CD4-positive, alpha-beta memory T cell (primary cell): ENCODE measurements at regions of chr1 and their contacts with region 1.

Region 1: GRCh38 chr1:26279456-26280332 is at the start of gene SH3BGRL3:
- DNase-seq: peak; percentile 83 to 88 (median 86)
- H3K4me3 ChIP-seq: peak within 1 kb of the TSS; percentile 50 to 92
- H3K4me3 Mint-ChIP-seq: peak within 1 kb of the TSS; percentile 85 to 96 (median 90)
- H3K27ac ChIP-seq: peak within 1 kb of the TSS; percentile 82
- H3K27ac Mint-ChIP-seq: peak within 1 kb of the TSS; percentile 94 to 98 (median 97)
- H3K4me1 ChIP-seq: peaks cover 88% of the 10 kb centered on the region
- H3K4me1 Mint-ChIP-seq: peaks cover 58 to 90% (median 76%) of the 10 kb centered on the region in 4 donors
- H3K27me3 ChIP-seq: no peaks in the 10 kb centered on the region
- H3K27me3 Mint-ChIP-seq: no peaks in the 10 kb centered on the region
- total RNA-seq, gene SH3BGRL3: 293 to 305 TPM

Region 2: GRCh38 chr1:26161415-26162219 is 118.1 kb before region 1 on chr1:
- CTCF ChIA-PET with region 1: no interaction called
- POLR2A ChIA-PET with region 1: no interaction called
- intact Hi-C with region 1: no loop called
- DNase-seq: peak in 4 of 5 donors; percentile 20 to 35 (median 26)
- H3K4me3 ChIP-seq: no peak overlapping the region
- H3K4me3 Mint-ChIP-seq: peak overlapping the region in 7 of 8 donors; percentile 40 to 74 (median 59)
- H3K27ac ChIP-seq: no peak overlapping the region
- H3K27ac Mint-ChIP-seq: no peak overlapping the region
- H3K4me1 ChIP-seq: peaks cover 16% of the 10 kb centered on the region
- H3K4me1 Mint-ChIP-seq: peaks cover under 1 to 11% (median 8%) of the 10 kb centered on the region in 4 donors
- H3K27me3 ChIP-seq: peaks cover 7% of the 10 kb centered on the region
- H3K27me3 Mint-ChIP-seq: peaks cover 14 to 27% of the 10 kb centered on the region in 2 donors

Region 3: DNA sequence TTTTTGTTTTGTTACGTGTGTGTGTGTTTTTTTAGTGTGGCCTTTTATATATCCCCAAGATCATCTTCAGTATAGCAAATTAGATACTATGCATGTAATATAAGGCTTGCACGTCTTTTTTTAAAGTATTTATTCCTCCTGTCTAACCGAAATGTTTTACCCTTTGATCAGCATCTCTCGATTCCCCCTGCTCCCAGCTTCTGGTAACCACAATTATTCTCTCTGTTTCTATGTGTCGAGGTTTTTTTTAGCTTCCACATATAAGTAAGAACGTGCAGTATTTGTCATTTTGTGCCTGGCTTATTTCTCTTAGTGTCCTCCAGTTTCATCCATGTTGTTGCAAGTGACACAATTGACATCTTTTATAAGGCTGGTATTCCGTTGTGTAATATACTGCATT is 27.0 kb before region 1 on chr1:
- CTCF ChIA-PET with region 1: no interaction called
- POLR2A ChIA-PET with region 1: no interaction called
- intact Hi-C with region 1: no loop called
- DNase-seq: no peak
- H3K4me3 ChIP-seq: no peak overlapping the region
- H3K4me3 Mint-ChIP-seq: no peak overlapping the region
- H3K27ac ChIP-seq: no peak overlapping the region
- H3K27ac Mint-ChIP-seq: peak overlapping the region in 2 of 7 donors; percentile 9 to 46
- H3K4me1 ChIP-seq: no peaks in the 10 kb centered on the region
- H3K4me1 Mint-ChIP-seq: peaks cover 0 to 9% (median 2%) of the 10 kb centered on the region in 4 donors
- H3K27me3 ChIP-seq: no peaks in the 10 kb centered on the region
- H3K27me3 Mint-ChIP-seq: no peaks in the 10 kb centered on the region

Region 4: GRCh38 chr1:26306290-26307229 is 26.9 kb after region 1 on chr1 and contains the start of gene UBXN11:
- CTCF ChIA-PET with region 1: interaction called, 1,027 read pairs
- POLR2A ChIA-PET with region 1: interaction called, 3,358 read pairs
- intact Hi-C with region 1: no loop called
- DNase-seq: peak; percentile 90 to 97 (median 91)
- H3K4me3 ChIP-seq: peak within 1 kb of the TSS; percentile 69 to 86
- H3K4me3 Mint-ChIP-seq: peak within 1 kb of the TSS; percentile 95 to 99 (median 98)
- H3K27ac ChIP-seq: peak within 1 kb of the TSS; percentile 74
- H3K27ac Mint-ChIP-seq: peak within 1 kb of the TSS; percentile 92 to 99 (median 98)
- H3K4me1 ChIP-seq: peaks cover 42% of the 10 kb centered on the region
- H3K4me1 Mint-ChIP-seq: peaks cover 25 to 40% (median 33%) of the 10 kb centered on the region in 4 donors
- H3K27me3 ChIP-seq: no peaks in the 10 kb centered on the region
- H3K27me3 Mint-ChIP-seq: no peaks in the 10 kb centered on the region
- total RNA-seq, gene UBXN11: 115 to 117 TPM

Region 5: GRCh38 chr1:26582836-26583460 is 303.3 kb after region 1 on chr1:
- CTCF ChIA-PET with region 1: no interaction called
- POLR2A ChIA-PET with region 1: no interaction called
- intact Hi-C with region 1: no loop called
- DNase-seq: no peak
- H3K4me3 ChIP-seq: no peak overlapping the region
- H3K4me3 Mint-ChIP-seq: no peak overlapping the region
- H3K27ac ChIP-seq: no peak overlapping the region
- H3K27ac Mint-ChIP-seq: peak overlapping the region in 3 of 7 donors; percentile 16 to 82 (median 44)
- H3K4me1 ChIP-seq: no peaks in the 10 kb centered on the region
- H3K4me1 Mint-ChIP-seq: peaks cover 5 to 12% (median 6%) of the 10 kb centered on the region in 4 donors
- H3K27me3 ChIP-seq: no peaks in the 10 kb centered on the region
- H3K27me3 Mint-ChIP-seq: no peaks in the 10 kb centered on the region